Motor neuron (in vitro differentiated cells): ENCODE measurements at regions of chr10 and their contacts with region 1.

Region 1: GRCh38 chr10:60456053-60456452 is 66.4 kb upstream of the ANK3 start:
- ATAC-seq: peak in 2 of 8 experiments; percentile 28 to 56
- H3K4me3 ChIP-seq: no peak overlapping the region
- H3K27ac ChIP-seq: no peak overlapping the region
- H3K4me1 ChIP-seq: peaks cover 10 to 12% of the 10 kb centered on the region in 2 donors

Region 2: GRCh38 chr10:59967069-59967468 is 489.0 kb before region 1 on chr10:
- in situ Hi-C with region 1: no loop called
- ATAC-seq: no peak
- H3K4me3 ChIP-seq: no peak overlapping the region
- H3K27ac ChIP-seq: no peak overlapping the region
- H3K4me1 ChIP-seq: peaks cover 0 to 2% of the 10 kb centered on the region in 2 donors

Region 3: GRCh38 chr10:60757420-60757895 is 301.4 kb after region 1 on chr10:
- in situ Hi-C with region 1: loop called in 1 of 9 experiments (anchors 25 kb)
- ATAC-seq: peak in 3 of 8 experiments; percentile 33 to 51 (median 41)
- H3K4me3 ChIP-seq: no peak overlapping the region
- H3K27ac ChIP-seq: no peak overlapping the region
- H3K4me1 ChIP-seq: no peaks in the 10 kb centered on the region